ENCODE measurements at regions of chr6 and their contacts with region 1.

Region 1: GRCh38 chr6:132483779-132484679 is 28.9 kb downstream of the STX7 start:
- DNase-seq: peak; percentile 80
- H3K4me3 Mint-ChIP-seq: no peak overlapping the region
- H3K27ac Mint-ChIP-seq: no peak overlapping the region
- H3K4me1 Mint-ChIP-seq: peaks cover 8% of the 10 kb centered on the region
- H3K27me3 Mint-ChIP-seq: no peaks in the 10 kb centered on the region
- CTCF ChIP-seq: peak; percentile 67

Region 2: DNA sequence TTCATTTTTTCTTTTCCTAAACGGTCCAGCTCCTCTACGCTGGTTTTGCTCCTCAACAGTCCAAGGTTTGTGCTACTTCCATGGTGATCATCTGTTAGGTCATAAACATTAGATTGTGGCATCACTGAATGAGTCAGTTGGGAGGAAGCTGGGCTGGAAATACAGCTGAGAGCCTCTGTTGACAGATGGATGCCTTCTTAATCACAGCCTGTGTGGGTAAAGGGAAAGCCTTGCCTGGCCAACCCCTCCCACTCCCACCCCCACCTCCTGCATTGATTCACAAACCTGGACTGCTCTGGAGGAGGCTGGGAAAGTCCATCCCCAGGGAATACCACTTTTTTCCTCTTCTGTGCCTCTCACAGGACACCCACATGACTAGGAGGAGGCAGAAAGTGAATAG is 352.3 kb before region 1 on chr6:
- CTCF ChIA-PET with region 1: no interaction called
- POLR2A ChIA-PET with region 1: no interaction called
- intact Hi-C with region 1: no loop called
- DNase-seq: peak; percentile 63
- H3K4me3 Mint-ChIP-seq: no peak overlapping the region
- H3K27ac Mint-ChIP-seq: no peak overlapping the region
- H3K4me1 Mint-ChIP-seq: no peaks in the 10 kb centered on the region
- H3K27me3 Mint-ChIP-seq: no peaks in the 10 kb centered on the region
- CTCF ChIP-seq: no peak

Region 3: DNA sequence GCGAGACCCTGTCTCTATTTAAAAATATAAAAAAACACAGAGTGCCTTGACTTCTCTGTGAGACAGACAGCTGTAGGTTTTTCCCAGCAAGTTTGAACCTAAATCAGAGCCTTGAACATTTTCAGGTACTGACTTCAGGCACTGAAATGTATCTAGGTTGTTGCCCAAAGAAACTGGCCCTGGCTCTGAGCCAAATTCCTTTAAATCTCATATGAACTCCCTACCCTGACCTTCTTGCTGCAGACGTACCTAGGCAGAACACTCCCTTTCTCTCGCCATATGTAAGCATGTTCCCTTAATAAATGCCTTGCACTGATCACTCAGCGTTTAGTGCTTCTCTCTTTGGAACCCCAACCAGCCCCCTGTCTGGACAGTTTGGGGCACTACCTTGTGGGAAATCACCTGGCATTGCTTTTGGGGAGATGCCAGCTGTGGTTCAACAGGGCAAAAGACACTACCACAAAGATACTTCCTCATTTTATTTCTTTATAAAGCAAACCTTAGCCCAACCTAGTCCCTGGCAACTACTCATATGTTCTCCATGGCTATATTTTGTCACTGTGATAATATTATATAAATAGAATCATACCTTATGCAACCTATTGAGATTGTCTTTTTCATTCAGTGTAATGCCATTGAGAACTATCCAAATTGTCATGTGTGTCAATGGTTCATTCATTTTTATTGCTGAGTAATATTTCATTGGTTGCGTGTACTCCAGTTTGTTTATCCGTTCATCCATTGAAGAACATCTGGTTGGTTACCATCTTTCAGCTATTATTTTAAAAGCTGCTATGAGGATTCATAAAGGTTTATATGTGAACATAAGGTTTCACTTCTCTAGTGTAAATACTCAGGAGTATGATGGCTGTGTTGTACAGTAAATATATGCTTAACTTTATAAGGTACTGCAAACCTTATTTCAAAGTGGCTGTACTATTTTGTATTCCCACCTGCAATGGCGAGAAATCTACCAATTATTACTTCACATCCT is 197.7 kb before region 1 on chr6:
- CTCF ChIA-PET with region 1: interaction called, 12 read pairs
- POLR2A ChIA-PET with region 1: no interaction called
- intact Hi-C with region 1: no loop called
- DNase-seq: peak; percentile 7
- H3K4me3 Mint-ChIP-seq: no peak overlapping the region
- H3K27ac Mint-ChIP-seq: no peak overlapping the region
- H3K4me1 Mint-ChIP-seq: no peaks in the 10 kb centered on the region
- H3K27me3 Mint-ChIP-seq: no peaks in the 10 kb centered on the region
- CTCF ChIP-seq: no peak

Region 4: DNA sequence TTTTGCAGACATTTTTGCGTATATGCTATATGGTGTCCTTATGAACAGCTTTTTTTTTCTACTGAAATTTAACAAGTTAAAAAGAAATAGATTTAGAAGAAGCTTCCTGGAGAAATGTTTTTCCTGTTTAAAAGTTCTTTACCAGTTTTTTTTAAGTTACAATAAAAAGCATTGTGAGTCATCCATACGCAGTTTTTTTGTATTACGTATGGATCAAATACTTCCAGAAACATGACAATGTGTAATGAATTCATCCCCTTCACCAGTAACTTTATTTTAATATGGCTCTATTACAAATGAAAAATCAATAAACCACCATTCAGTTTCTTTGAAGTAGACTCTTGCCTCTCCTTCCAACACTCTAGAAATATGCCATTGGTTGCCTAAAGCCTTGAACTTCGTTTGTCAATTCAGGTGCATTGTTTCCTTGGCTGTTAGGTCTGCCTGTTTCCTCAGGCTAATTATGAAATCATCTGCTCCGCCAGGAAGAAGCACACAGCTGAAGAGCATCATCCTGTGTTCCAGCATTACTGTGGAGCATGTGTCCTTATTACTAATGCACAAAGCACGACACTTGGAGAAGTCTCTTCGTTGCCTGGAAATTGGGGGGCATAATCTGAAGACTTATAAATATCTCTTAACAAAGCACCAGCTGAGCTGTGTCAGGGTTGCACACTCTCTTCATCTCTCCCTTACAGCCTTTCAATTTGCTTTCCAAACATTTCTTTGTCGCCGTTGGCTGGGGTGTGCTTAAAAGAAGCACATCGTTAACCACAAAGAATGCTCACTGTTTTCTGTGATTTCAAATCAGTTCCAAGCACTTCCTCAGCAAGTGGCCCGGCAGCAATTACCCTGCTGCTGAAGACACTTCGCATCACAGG is 92.4 kb before region 1 on chr6:
- CTCF ChIA-PET with region 1: interaction called, 4 read pairs
- POLR2A ChIA-PET with region 1: no interaction called
- intact Hi-C with region 1: loop called (anchors 10 kb)
- DNase-seq: peak; percentile 68
- H3K4me3 Mint-ChIP-seq: no peak overlapping the region
- H3K27ac Mint-ChIP-seq: no peak overlapping the region
- H3K4me1 Mint-ChIP-seq: peaks cover 29% of the 10 kb centered on the region
- H3K27me3 Mint-ChIP-seq: no peaks in the 10 kb centered on the region
- CTCF ChIP-seq: no peak

Region 5: GRCh38 chr6:132495604-132496079 is 11.6 kb after region 1 on chr6:
- CTCF ChIA-PET with region 1: interaction called, 29 read pairs
- POLR2A ChIA-PET with region 1: no interaction called
- intact Hi-C with region 1: no loop called
- DNase-seq: no peak
- H3K4me3 Mint-ChIP-seq: no peak overlapping the region
- H3K27ac Mint-ChIP-seq: no peak overlapping the region
- H3K4me1 Mint-ChIP-seq: peaks cover 14% of the 10 kb centered on the region
- H3K27me3 Mint-ChIP-seq: no peaks in the 10 kb centered on the region
- CTCF ChIP-seq: no peak

Region 6: GRCh38 chr6:132659082-132659481 is 175.1 kb after region 1 on chr6 and contains the start of gene TAAR1:
- CTCF ChIA-PET with region 1: no interaction called
- POLR2A ChIA-PET with region 1: no interaction called
- intact Hi-C with region 1: no loop called
- DNase-seq: no peak
- H3K4me3 Mint-ChIP-seq: no peak within 1 kb of the TSS
- H3K27ac Mint-ChIP-seq: no peak within 1 kb of the TSS
- H3K4me1 Mint-ChIP-seq: no peaks in the 10 kb centered on the region
- H3K27me3 Mint-ChIP-seq: peaks cover 13% of the 10 kb centered on the region
- CTCF ChIP-seq: no peak
- total RNA-seq, gene TAAR1: not detected in 2 replicates

Region 7: DNA sequence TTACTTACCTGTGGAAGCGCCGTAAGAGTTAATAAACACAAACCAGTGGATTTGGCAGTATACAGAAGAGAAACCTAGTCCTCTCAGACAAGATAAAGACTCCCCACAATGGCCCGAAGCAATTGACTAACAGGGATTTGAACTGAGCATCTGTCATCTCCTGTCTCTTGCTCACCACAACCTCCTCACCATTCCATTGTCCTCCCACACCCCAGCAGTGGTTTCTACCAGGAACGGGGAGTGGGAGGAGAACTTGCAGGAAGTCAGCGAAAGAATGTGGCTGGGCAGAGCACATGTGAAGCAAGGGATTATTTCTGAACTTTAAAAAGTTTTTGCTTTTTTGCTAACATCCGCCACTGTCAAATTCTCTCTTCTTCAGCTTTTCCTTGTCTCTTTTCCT is 199.5 kb after region 1 on chr6:
- CTCF ChIA-PET with region 1: no interaction called
- POLR2A ChIA-PET with region 1: no interaction called
- intact Hi-C with region 1: no loop called
- DNase-seq: peak; percentile 85
- H3K4me3 Mint-ChIP-seq: peak overlapping the region; percentile 66
- H3K27ac Mint-ChIP-seq: peak overlapping the region; percentile 95
- H3K4me1 Mint-ChIP-seq: peaks cover 28% of the 10 kb centered on the region
- H3K27me3 Mint-ChIP-seq: no peaks in the 10 kb centered on the region
- CTCF ChIP-seq: no peak